Activated T-helper 1 cell treated with anti-CD3 and anti-CD28 coated beads, Interleukin-12 subunit alpha, Interleukin-12 subunit beta, Interleukin-2, Interleukin-4 antibody, amounts not matched to agents 30 ng/mL and 10 ng/mL and 1 ng/mL, durations not matched to agents 14 hours and 24 hours and 36 hours (primary cell): ENCODE measurements at regions of chr6 and their contacts with region 1.

Region 1: DNA sequence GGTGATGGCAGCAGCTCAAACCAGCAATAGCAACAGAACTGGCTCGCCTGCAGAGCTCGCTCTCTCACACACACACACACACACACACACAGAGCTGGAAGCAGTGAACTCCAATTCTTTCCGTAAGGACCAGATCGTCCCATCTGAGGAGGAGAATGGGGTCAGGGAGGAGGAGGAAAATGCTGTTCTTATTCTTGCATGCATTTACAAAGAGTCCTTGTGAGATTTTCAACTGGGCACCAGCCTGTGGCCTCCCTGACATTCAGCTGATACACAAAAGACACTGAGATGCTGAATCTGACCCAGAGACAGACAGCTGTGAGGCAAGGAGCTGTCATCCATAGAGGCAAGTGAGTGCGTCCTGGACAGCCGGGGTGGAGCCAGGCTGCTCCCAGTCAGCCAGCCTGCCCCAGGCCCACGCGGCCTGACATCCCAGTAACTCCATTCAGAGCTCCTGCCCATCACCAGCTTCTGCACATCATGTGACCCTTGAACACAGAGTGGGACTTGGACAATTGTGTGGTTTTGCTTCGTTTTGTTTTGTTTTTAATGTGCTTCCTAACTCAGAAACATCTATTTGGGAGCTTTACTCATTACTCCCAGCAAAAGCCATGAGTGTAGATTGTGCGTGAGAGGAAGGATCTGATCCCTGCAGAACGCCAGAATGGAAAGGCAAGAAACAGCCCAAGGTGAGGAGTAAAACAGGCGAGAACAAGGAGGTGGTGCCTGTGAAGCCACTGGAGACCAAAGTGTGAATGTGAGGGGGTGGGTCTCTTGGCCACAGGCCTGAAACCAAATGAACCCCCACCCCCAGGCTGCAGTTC is 2.1 kb downstream of the SERPINB9 start:
- DNase-seq: no peak
- H3K4me3 Mint-ChIP-seq: peak overlapping the region; percentile 94
- H3K27ac Mint-ChIP-seq: peak overlapping the region; percentile 93
- H3K4me1 Mint-ChIP-seq: peaks cover 60% of the 10 kb centered on the region
- H3K27me3 Mint-ChIP-seq: peaks cover 2% of the 10 kb centered on the region

Region 2: GRCh38 chr6:2221726-2222274 is 679.2 kb before region 1 on chr6:
- intact Hi-C with region 1: no loop called
- DNase-seq: no peak
- H3K4me3 Mint-ChIP-seq: peak overlapping the region; percentile 90
- H3K27ac Mint-ChIP-seq: peak overlapping the region; percentile 89
- H3K4me1 Mint-ChIP-seq: peaks cover 39% of the 10 kb centered on the region
- H3K27me3 Mint-ChIP-seq: no peaks in the 10 kb centered on the region

Region 3: GRCh38 chr6:2669067-2669700 is 231.8 kb before region 1 on chr6:
- intact Hi-C with region 1: no loop called
- DNase-seq: no peak
- H3K4me3 Mint-ChIP-seq: no peak overlapping the region
- H3K27ac Mint-ChIP-seq: no peak overlapping the region
- H3K4me1 Mint-ChIP-seq: no peaks in the 10 kb centered on the region
- H3K27me3 Mint-ChIP-seq: peaks cover 1% of the 10 kb centered on the region

Region 4: GRCh38 chr6:2846873-2847224 is 54.2 kb before region 1 on chr6:
- intact Hi-C with region 1: loop called (anchors 1 kb)
- DNase-seq: no peak
- H3K4me3 Mint-ChIP-seq: peak overlapping the region; percentile 31
- H3K27ac Mint-ChIP-seq: peak overlapping the region; percentile 41
- H3K4me1 Mint-ChIP-seq: peaks cover 60% of the 10 kb centered on the region
- H3K27me3 Mint-ChIP-seq: no peaks in the 10 kb centered on the region

Region 5: GRCh38 chr6:2853761-2854395 is 47.2 kb before region 1 on chr6:
- intact Hi-C with region 1: loop called (anchors 1 kb)
- DNase-seq: no peak
- H3K4me3 Mint-ChIP-seq: peak overlapping the region; percentile 73
- H3K27ac Mint-ChIP-seq: peak overlapping the region; percentile 99
- H3K4me1 Mint-ChIP-seq: peaks cover 75% of the 10 kb centered on the region
- H3K27me3 Mint-ChIP-seq: no peaks in the 10 kb centered on the region

Region 6: GRCh38 chr6:2876210-2877056 is 24.6 kb before region 1 on chr6:
- intact Hi-C with region 1: loop called (anchors 1 kb)
- DNase-seq: no peak
- H3K4me3 Mint-ChIP-seq: peak overlapping the region; percentile 87
- H3K27ac Mint-ChIP-seq: peak overlapping the region; percentile 98
- H3K4me1 Mint-ChIP-seq: peaks cover 81% of the 10 kb centered on the region
- H3K27me3 Mint-ChIP-seq: no peaks in the 10 kb centered on the region

Region 7: DNA sequence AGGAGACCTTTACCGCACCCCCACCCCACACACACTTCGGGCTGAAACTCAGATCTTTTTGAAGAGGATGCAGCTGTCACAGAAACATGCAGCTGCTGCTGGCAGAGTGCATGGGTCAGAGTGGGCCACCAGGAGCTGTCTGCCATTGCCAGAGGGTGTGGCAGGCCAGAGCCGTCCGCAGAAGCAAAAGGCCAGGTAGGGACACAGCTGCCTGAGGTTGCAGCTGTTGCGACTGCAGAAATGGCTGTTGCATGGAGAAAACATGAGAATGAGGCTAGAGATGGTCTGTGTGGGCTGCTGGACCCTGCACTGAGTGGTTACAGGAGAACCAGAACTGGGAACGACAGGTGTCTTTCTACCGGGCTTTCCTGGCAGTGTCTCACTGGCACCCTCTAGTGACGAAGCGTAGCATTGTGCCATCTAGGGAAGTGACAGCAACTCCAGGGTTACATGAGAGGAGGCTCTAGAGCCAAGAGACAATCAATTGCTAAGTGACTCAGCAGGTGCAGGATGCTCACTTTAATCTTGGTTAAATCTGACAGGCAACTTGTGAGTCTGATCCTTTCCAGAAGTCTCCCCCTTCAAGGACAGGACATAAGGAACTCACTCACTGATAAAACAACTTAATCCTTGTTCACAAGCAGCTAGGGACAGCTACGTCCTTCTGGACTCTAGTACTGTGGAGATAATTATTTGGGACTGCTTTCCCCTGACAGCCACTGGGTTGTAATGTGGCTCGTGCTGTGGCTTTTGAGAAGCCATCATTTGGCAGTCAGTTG is 31.1 kb after region 1 on chr6:
- intact Hi-C with region 1: loop called (anchors 5 kb)
- DNase-seq: peak; percentile 81
- H3K4me3 Mint-ChIP-seq: no peak overlapping the region
- H3K27ac Mint-ChIP-seq: peak overlapping the region; percentile 64
- H3K4me1 Mint-ChIP-seq: peaks cover 25% of the 10 kb centered on the region
- H3K27me3 Mint-ChIP-seq: peaks cover 6% of the 10 kb centered on the region